ENCODE measurements at regions of chr10 and their contacts with region 1.

Region 1: DNA sequence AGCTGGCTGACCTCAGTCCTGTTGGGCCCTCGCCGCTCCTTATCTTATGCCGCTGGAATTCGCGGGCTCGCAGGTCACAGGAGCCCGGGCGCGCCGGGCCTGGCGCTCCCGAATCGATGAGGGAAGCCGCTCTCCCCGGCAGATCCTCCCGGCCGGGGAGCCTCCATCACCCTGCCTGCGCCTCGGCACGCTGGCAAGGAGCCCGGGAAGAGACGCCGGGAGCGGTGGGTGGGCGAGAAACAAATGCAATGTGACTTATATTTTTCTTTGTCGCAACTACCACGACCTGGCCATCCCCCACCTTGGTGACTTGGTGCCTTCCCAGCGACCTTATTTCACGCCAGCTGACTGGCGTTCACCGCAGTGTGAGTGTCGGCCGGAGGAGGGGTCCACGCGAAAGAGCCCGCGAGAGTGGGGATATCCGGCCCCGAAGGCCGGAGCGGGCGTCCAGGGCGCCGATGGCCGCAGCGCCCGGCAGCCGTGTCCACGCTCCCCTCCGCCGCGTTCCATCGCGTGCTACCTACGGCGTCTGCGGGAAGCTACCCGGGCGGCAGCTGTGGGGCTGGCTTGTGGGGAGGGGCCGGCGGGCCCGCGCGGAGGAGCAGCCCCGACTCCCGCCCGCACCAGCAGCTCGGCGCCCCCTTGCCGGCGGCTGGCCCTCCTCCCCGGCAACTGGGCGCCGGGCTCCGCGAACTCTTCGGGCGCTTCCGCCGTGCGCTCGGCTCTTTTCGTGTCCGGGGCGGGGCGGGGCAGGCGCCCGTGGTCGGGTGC is 494 bp upstream of the BMPR1A start:
- DNase-seq: peak; percentile 33 to 93
- H3K4me3 ChIP-seq: peak overlapping the region; percentile 82 to 96
- H3K27ac ChIP-seq: peak overlapping the region; percentile 100
- H3K4me1 ChIP-seq: peaks cover 5 to 28% of the 10 kb centered on the region in 2 donors
- H3K27me3 ChIP-seq: no peaks in the 10 kb centered on the region
- CTCF ChIP-seq: no peak

Region 2: GRCh38 chr10:86710987-86711512 is 44.9 kb before region 1 on chr10:
- intact Hi-C with region 1: loop called (anchors 2 kb)
- DNase-seq: peak; percentile 58 to 94
- H3K4me3 ChIP-seq: peak overlapping the region; percentile 83 to 89
- H3K27ac ChIP-seq: peak overlapping the region; percentile 98
- H3K4me1 ChIP-seq: peaks cover 2 to 8% of the 10 kb centered on the region in 2 donors
- H3K27me3 ChIP-seq: no peaks in the 10 kb centered on the region
- CTCF ChIP-seq: peak; percentile 79 to 98 (median 89)

Region 3: GRCh38 chr10:86798611-86799010 is 42.7 kb after region 1 on chr10:
- intact Hi-C with region 1: loop called (anchors 5 kb)
- DNase-seq: no peak
- H3K4me3 ChIP-seq: peak overlapping the region; percentile 9 to 15
- H3K27ac ChIP-seq: peak overlapping the region; percentile 10 to 36
- H3K4me1 ChIP-seq: peaks cover 0 to 31% of the 10 kb centered on the region in 2 donors
- H3K27me3 ChIP-seq: no peaks in the 10 kb centered on the region
- CTCF ChIP-seq: no peak

Region 4: GRCh38 chr10:86888585-86889381 is 132.9 kb after region 1 on chr10:
- intact Hi-C with region 1: no loop called
- DNase-seq: no peak
- H3K4me3 ChIP-seq: no peak overlapping the region
- H3K27ac ChIP-seq: peak overlapping the region; percentile 28 to 69
- H3K4me1 ChIP-seq: peaks cover 0 to 11% of the 10 kb centered on the region in 2 donors
- H3K27me3 ChIP-seq: no peaks in the 10 kb centered on the region
- CTCF ChIP-seq: no peak

Region 5: GRCh38 chr10:86899670-86900276 is 143.8 kb after region 1 on chr10:
- intact Hi-C with region 1: loop called (anchors 5 kb)
- DNase-seq: peak in 1 of 2 donors; percentile 81
- H3K4me3 ChIP-seq: no peak overlapping the region
- H3K27ac ChIP-seq: peak overlapping the region in 1 of 2 donors; percentile 15
- H3K4me1 ChIP-seq: peaks cover 0 to 17% of the 10 kb centered on the region in 2 donors
- H3K27me3 ChIP-seq: no peaks in the 10 kb centered on the region
- CTCF ChIP-seq: peak; percentile 64 to 73 (median 69)

Region 6: GRCh38 chr10:87094373-87095235 is 338.7 kb after region 1 on chr10 and contains the starts of genes GLUD1 and SHLD2:
- intact Hi-C with region 1: loop called (anchors 2 kb)
- DNase-seq: peak; percentile 69 to 97
- H3K4me3 ChIP-seq: peak within 1 kb of the TSS; percentile 81 to 84
- H3K27ac ChIP-seq: peak within 1 kb of the TSS; percentile 96 to 99
- H3K4me1 ChIP-seq: peaks cover 6 to 25% of the 10 kb centered on the region in 2 donors
- H3K27me3 ChIP-seq: no peaks in the 10 kb centered on the region
- CTCF ChIP-seq: no peak
- total RNA-seq, gene GLUD1: 134 TPM
- total RNA-seq, gene SHLD2: 19.7 TPM

Measured in ascending aorta (tissue), 2 donors.